MCF 10A (cell line): ENCODE measurements at regions of chr1 and their contacts with region 1.

Region 1: GRCh38 chr1:231001892-231002291 is 23.0 kb downstream of the ARV1 start:
- DNase-seq: no peak
- H3K4me3 Mint-ChIP-seq: no peak overlapping the region
- H3K27ac Mint-ChIP-seq: no peak overlapping the region
- H3K4me1 Mint-ChIP-seq: no peaks in the 10 kb centered on the region
- H3K27me3 Mint-ChIP-seq: no peaks in the 10 kb centered on the region
- CTCF ChIP-seq: no peak

Region 2: GRCh38 chr1:231016234-231016633 is 14.3 kb after region 1 on chr1:
- CTCF ChIA-PET with region 1: interaction called, 3 read pairs
- POLR2A ChIA-PET with region 1: interaction called, 14 read pairs
- intact Hi-C with region 1: no loop called
- DNase-seq: no peak
- H3K4me3 Mint-ChIP-seq: no peak overlapping the region
- H3K27ac Mint-ChIP-seq: no peak overlapping the region
- H3K4me1 Mint-ChIP-seq: peaks cover 22% of the 10 kb centered on the region
- H3K27me3 Mint-ChIP-seq: no peaks in the 10 kb centered on the region
- CTCF ChIP-seq: no peak